ENCODE measurements at regions of chr11 and their contacts with region 1.

Region 1: GRCh38 chr11:111841370-111842053 is 29.9 kb downstream of the ALG9 start:
- DNase-seq: peak; percentile 48
- ATAC-seq: peak; percentile 88
- H3K4me3 ChIP-seq: no peak overlapping the region
- H3K27ac ChIP-seq: no peak overlapping the region
- H3K4me1 ChIP-seq: peaks cover 6% of the 10 kb centered on the region; the same call in 1 of the 2 replicates
- H3K27me3 ChIP-seq: no peaks in the 10 kb centered on the region
- CTCF ChIP-seq: peak; percentile 79 to 91 (median 82)
- EP300 ChIP-seq: no peak
- POLR2A ChIP-seq: no peak
- RAD21 ChIP-seq: peak; percentile 93

Region 2: GRCh38 chr11:111454561-111455192 is 386.8 kb before region 1 on chr11:
- CTCF ChIA-PET with region 1: interaction called, 8 read pairs
- POLR2A ChIA-PET with region 1: no interaction called
- RAD21 ChIA-PET with region 1: interaction called, 3 read pairs
- SMC1A ChIA-PET with region 1: no interaction called
- in situ Hi-C with region 1: no loop called
- intact Hi-C with region 1: loop called (anchors 10 kb)
- DNase-seq: no peak
- ATAC-seq: peak; percentile 77
- H3K4me3 ChIP-seq: no peak overlapping the region
- H3K27ac ChIP-seq: no peak overlapping the region
- H3K4me1 ChIP-seq: peaks cover 9% of the 10 kb centered on the region
- H3K27me3 ChIP-seq: peaks cover 3% of the 10 kb centered on the region in 2 experiments; a peak in 3 of 4 replicates
- CTCF ChIP-seq: peak; percentile 21 to 52 (median 38); a peak in 5 of 6 replicates
- EP300 ChIP-seq: no peak
- POLR2A ChIP-seq: no peak
- RAD21 ChIP-seq: peak; percentile 43

Region 3: GRCh38 chr11:111565114-111565720 is 276.3 kb before region 1 on chr11:
- CTCF ChIA-PET with region 1: interaction called, 15 read pairs
- POLR2A ChIA-PET with region 1: no interaction called
- RAD21 ChIA-PET with region 1: interaction called, 3 read pairs
- SMC1A ChIA-PET with region 1: interaction called, 7 read pairs
- in situ Hi-C with region 1: no loop called
- intact Hi-C with region 1: loop called (anchors 1 kb)
- DNase-seq: peak; percentile 32
- ATAC-seq: peak; percentile 75
- H3K4me3 ChIP-seq: no peak overlapping the region
- H3K27ac ChIP-seq: no peak overlapping the region
- H3K4me1 ChIP-seq: no peaks in the 10 kb centered on the region
- H3K27me3 ChIP-seq: no peaks in the 10 kb centered on the region
- CTCF ChIP-seq: peak; percentile 73 to 86 (median 83)
- EP300 ChIP-seq: no peak
- POLR2A ChIP-seq: no peak
- RAD21 ChIP-seq: peak; percentile 89

Region 4: DNA sequence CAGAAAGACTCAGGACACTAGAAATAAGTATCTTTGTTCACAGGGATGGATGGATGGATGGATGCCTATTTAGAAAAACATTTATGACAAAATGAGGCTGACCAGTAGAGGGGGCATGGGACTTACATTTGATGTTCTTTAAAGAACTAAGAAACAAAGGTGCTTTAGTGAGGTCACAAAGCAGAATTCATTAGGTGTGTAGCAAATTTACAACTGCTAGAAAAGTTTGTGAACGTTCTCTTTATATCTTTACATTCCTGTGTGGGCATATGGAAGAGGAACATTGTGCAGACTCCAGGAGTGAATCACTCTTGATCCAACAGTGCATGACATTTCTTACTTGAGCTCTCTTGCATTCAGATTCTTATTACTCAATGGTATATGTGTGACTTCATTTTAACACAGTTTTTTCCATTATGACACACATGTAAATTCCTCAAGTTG is 255.1 kb before region 1 on chr11:
- CTCF ChIA-PET with region 1: interaction called, 88 read pairs
- POLR2A ChIA-PET with region 1: no interaction called
- RAD21 ChIA-PET with region 1: interaction called, 30 read pairs
- SMC1A ChIA-PET with region 1: interaction called, 40 read pairs
- in situ Hi-C with region 1: no loop called
- intact Hi-C with region 1: loop called (anchors 1 kb)
- DNase-seq: no peak
- ATAC-seq: peak; percentile 84
- H3K4me3 ChIP-seq: no peak overlapping the region
- H3K27ac ChIP-seq: no peak overlapping the region
- H3K4me1 ChIP-seq: no peaks in the 10 kb centered on the region; the same call in 1 of the 2 replicates
- H3K27me3 ChIP-seq: no peaks in the 10 kb centered on the region; a peak in 1 of 4 replicates
- CTCF ChIP-seq: peak; percentile 53 to 74 (median 67)
- EP300 ChIP-seq: no peak
- POLR2A ChIP-seq: no peak
- RAD21 ChIP-seq: peak; percentile 79

Region 5: GRCh38 chr11:111766093-111766833 is 75.2 kb before region 1 on chr11 and contains the start of gene PPP2R1B:
- CTCF ChIA-PET with region 1: interaction called, 30 read pairs
- POLR2A ChIA-PET with region 1: interaction called, 5 read pairs
- RAD21 ChIA-PET with region 1: interaction called, 4 read pairs
- SMC1A ChIA-PET with region 1: interaction called, 18 read pairs
- in situ Hi-C with region 1: no loop called
- intact Hi-C with region 1: no loop called
- DNase-seq: peak; percentile 35
- ATAC-seq: peak; percentile 97
- H3K4me3 ChIP-seq: peak within 1 kb of the TSS; percentile 78
- H3K27ac ChIP-seq: peak within 1 kb of the TSS; percentile 77
- H3K4me1 ChIP-seq: no peaks in the 10 kb centered on the region; the same call in 1 of the 2 replicates
- H3K27me3 ChIP-seq: no peaks in the 10 kb centered on the region
- CTCF ChIP-seq: no peak
- EP300 ChIP-seq: no peak
- POLR2A ChIP-seq: peak; percentile 89
- RAD21 ChIP-seq: no peak
- polyA plus RNA-seq, gene PPP2R1B: 28.5 to 37.0 TPM

Region 6: DNA sequence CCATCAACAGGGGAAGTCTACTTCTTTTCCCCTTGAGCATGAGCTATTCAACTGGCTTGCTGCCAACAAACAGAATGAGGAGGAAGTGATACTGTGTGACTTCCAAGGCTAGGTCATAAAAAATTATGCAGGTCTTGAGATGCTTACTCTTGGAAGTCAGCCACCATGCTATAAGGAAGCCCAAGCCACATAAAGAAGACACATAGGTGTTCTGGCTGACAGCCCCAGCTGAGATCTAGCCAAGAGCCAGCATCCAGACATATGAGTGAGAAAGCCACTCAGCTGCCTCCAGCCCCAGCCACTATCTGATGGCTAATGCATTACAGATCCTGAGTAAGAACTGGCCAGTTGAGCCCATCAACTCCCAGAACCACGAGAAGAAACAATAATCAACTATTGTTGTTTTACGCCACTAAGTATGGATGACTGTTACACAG is 44.3 kb before region 1 on chr11:
- CTCF ChIA-PET with region 1: interaction called, 12 read pairs
- POLR2A ChIA-PET with region 1: no interaction called
- RAD21 ChIA-PET with region 1: no interaction called
- SMC1A ChIA-PET with region 1: interaction called, 4 read pairs
- in situ Hi-C with region 1: no loop called
- intact Hi-C with region 1: no loop called
- DNase-seq: peak; percentile 34
- ATAC-seq: peak; percentile 78
- H3K4me3 ChIP-seq: no peak overlapping the region
- H3K27ac ChIP-seq: no peak overlapping the region
- H3K4me1 ChIP-seq: no peaks in the 10 kb centered on the region
- H3K27me3 ChIP-seq: no peaks in the 10 kb centered on the region
- CTCF ChIP-seq: no peak
- EP300 ChIP-seq: no peak
- POLR2A ChIP-seq: no peak
- RAD21 ChIP-seq: no peak